Ascending aorta (tissue), 2 donors: ENCODE measurements at regions of chr21 and their contacts with region 1.

Region 1: GRCh38 chr21:45319461-45320211 is 31.9 kb upstream of the POFUT2 start:
- DNase-seq: peak; percentile 61 to 94
- H3K4me3 ChIP-seq: no peak overlapping the region
- H3K27ac ChIP-seq: peak overlapping the region; percentile 90 to 99
- H3K4me1 ChIP-seq: peaks cover 48 to 71% of the 10 kb centered on the region in 2 donors
- H3K27me3 ChIP-seq: no peaks in the 10 kb centered on the region
- CTCF ChIP-seq: peak in 2 of 3 experiments; percentile 29 to 38

Region 2: GRCh38 chr21:44834936-44835646 is 484.5 kb before region 1 on chr21:
- intact Hi-C with region 1: no loop called
- DNase-seq: no peak
- H3K4me3 ChIP-seq: no peak overlapping the region
- H3K27ac ChIP-seq: no peak overlapping the region
- H3K4me1 ChIP-seq: no peaks in the 10 kb centered on the region
- H3K27me3 ChIP-seq: no peaks in the 10 kb centered on the region
- CTCF ChIP-seq: no peak

Region 3: GRCh38 chr21:45294509-45295291 is 24.9 kb before region 1 on chr21:
- intact Hi-C with region 1: loop called (anchors 1 kb)
- DNase-seq: peak; percentile 68 to 97
- H3K4me3 ChIP-seq: peak overlapping the region in 1 of 2 donors; percentile 15
- H3K27ac ChIP-seq: peak overlapping the region; percentile 78 to 99
- H3K4me1 ChIP-seq: peaks cover 21 to 30% of the 10 kb centered on the region in 2 donors
- H3K27me3 ChIP-seq: no peaks in the 10 kb centered on the region
- CTCF ChIP-seq: no peak

Region 4: DNA sequence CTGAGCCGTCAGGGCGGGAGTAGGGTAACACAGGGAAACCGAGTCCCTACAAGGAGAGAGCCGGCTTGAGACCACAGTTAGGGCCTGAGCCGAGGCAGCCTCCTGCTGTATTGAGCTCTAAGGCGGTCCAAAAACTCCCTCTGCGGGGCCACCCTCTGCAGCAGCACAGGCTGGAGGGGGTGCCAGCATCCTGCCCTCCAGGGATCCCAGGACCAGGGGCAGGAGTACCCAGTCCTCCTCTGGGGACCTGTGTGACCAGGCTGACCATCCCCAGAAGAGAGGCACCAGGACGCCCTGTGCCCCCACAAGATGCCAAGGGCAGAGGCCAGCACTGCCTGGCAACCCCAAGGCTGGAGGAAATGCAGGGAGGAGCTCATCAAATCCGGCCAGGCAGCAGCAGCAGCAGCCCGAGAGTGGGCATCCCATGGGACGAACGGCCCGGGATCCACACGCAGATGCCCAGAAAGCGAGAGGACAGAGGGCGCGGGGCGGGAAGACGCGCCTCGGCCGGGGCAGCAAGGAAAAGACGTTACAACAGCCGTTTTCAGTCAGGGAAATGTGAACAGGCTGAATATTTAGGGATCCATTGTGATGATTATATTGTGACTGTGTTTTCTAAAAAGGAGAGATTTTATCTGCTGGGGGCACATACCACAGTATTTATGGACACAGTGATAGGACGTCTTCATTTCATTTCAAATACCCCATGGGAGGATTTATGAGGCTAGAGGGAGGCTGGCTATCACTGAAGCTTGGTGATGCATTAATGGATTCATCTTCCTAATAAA is 28.3 kb after region 1 on chr21:
- intact Hi-C with region 1: loop called (anchors 2 kb)
- DNase-seq: no peak
- H3K4me3 ChIP-seq: peak overlapping the region in 1 of 2 donors; percentile 45
- H3K27ac ChIP-seq: peak overlapping the region; percentile 70 to 74
- H3K4me1 ChIP-seq: peaks cover 5 to 25% of the 10 kb centered on the region in 2 donors
- H3K27me3 ChIP-seq: no peaks in the 10 kb centered on the region
- CTCF ChIP-seq: no peak

Region 5: GRCh38 chr21:45363921-45364467 is 44.4 kb after region 1 on chr21:
- intact Hi-C with region 1: loop called (anchors 1 kb)
- DNase-seq: peak; percentile 83 to 96
- H3K4me3 ChIP-seq: peak overlapping the region in 1 of 2 donors; percentile 36
- H3K27ac ChIP-seq: peak overlapping the region; percentile 98 to 99
- H3K4me1 ChIP-seq: peaks cover 21 to 44% of the 10 kb centered on the region in 2 donors
- H3K27me3 ChIP-seq: no peaks in the 10 kb centered on the region
- CTCF ChIP-seq: no peak

Region 6: GRCh38 chr21:45404730-45405270 is 85.2 kb after region 1 on chr21 and contains the start of gene COL18A1:
- intact Hi-C with region 1: loop called (anchors 1 kb)
- DNase-seq: peak in 1 of 2 donors; percentile 83
- H3K4me3 ChIP-seq: peak within 1 kb of the TSS; percentile 85 to 91
- H3K27ac ChIP-seq: peak within 1 kb of the TSS; percentile 92 to 93
- H3K4me1 ChIP-seq: peaks cover 15 to 29% of the 10 kb centered on the region in 2 donors
- H3K27me3 ChIP-seq: no peaks in the 10 kb centered on the region
- CTCF ChIP-seq: no peak
- total RNA-seq, gene COL18A1: 699 TPM